Activated CD8-positive, alpha-beta T cell treated with anti-CD3 and anti-CD28 coated beads, Interleukin-2, amount 10 ng/mL, durations not matched to agents 7 days and 5 days (primary cell): ENCODE measurements at regions of chr12 and their contacts with region 1.

Region 1: GRCh38 chr12:1939801-1940607 is 21.6 kb upstream of the CACNA2D4 start:
- DNase-seq: peak; percentile 91
- ATAC-seq: peak; percentile 98
- H3K4me3 Mint-ChIP-seq: no peak overlapping the region
- H3K27ac Mint-ChIP-seq: no peak overlapping the region
- H3K4me1 Mint-ChIP-seq: peaks cover 4% of the 10 kb centered on the region
- H3K27me3 Mint-ChIP-seq: no peaks in the 10 kb centered on the region

Region 2: DNA sequence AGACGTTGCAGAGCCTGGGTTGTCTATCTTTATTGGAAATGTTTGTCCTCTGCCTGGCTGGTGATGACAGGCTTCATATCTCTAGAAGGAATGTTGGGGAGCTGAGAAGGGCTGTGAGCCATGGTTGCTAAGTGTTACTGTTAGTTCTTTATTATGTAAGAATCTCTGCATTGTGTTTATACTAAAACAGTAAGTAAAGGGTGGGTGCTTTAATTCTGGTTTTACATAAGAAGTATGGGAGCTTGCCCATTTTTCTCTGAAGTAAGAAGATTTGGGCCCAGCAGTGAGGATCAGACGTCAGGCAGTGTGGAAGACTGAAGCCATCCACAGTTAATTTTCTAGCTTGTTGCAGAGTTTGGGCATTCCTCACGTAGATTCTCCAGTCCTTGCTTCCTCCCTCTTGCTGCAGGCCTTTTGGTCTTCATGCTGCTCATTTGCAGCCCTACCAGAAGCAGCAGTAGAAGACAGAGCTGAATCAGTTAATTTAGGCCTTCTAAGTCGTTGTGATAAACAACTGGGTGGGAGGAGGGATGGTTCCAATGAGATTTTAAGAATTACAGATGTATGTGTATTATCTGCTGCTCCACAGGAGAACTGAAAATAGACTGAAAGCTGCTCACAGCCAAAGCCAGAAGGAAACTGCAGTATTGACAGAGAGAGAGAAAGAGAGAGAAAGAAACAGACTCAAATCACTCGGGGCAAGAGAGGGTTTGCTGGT is 289.6 kb before region 1 on chr12:
- CTCF ChIA-PET with region 1: interaction called, 47 read pairs
- POLR2A ChIA-PET with region 1: interaction called, 3 read pairs
- DNase-seq: no peak
- ATAC-seq: no peak
- H3K4me3 Mint-ChIP-seq: no peak overlapping the region
- H3K27ac Mint-ChIP-seq: no peak overlapping the region
- H3K4me1 Mint-ChIP-seq: peaks cover 15% of the 10 kb centered on the region
- H3K27me3 Mint-ChIP-seq: peaks cover 36% of the 10 kb centered on the region

Region 3: GRCh38 chr12:1795785-1796514 is 144.1 kb before region 1 on chr12:
- CTCF ChIA-PET with region 1: interaction called, 93 read pairs
- POLR2A ChIA-PET with region 1: interaction called, 7 read pairs
- DNase-seq: peak; percentile 94
- ATAC-seq: peak; percentile 97
- H3K4me3 Mint-ChIP-seq: peak overlapping the region; percentile 86
- H3K27ac Mint-ChIP-seq: peak overlapping the region; percentile 90
- H3K4me1 Mint-ChIP-seq: peaks cover 26% of the 10 kb centered on the region
- H3K27me3 Mint-ChIP-seq: no peaks in the 10 kb centered on the region

Region 4: GRCh38 chr12:1916371-1917171 is 23.4 kb before region 1 on chr12:
- CTCF ChIA-PET with region 1: interaction called, 24 read pairs
- POLR2A ChIA-PET with region 1: no interaction called
- DNase-seq: peak; percentile 16
- ATAC-seq: no peak
- H3K4me3 Mint-ChIP-seq: no peak overlapping the region
- H3K27ac Mint-ChIP-seq: peak overlapping the region; percentile 91
- H3K4me1 Mint-ChIP-seq: peaks cover 36% of the 10 kb centered on the region
- H3K27me3 Mint-ChIP-seq: peaks cover 16% of the 10 kb centered on the region

Region 5: GRCh38 chr12:1956716-1957115 is 16.7 kb after region 1 on chr12:
- CTCF ChIA-PET with region 1: interaction called, 41 read pairs
- POLR2A ChIA-PET with region 1: no interaction called
- DNase-seq: no peak
- ATAC-seq: no peak
- H3K4me3 Mint-ChIP-seq: no peak overlapping the region
- H3K27ac Mint-ChIP-seq: no peak overlapping the region
- H3K4me1 Mint-ChIP-seq: no peaks in the 10 kb centered on the region
- H3K27me3 Mint-ChIP-seq: no peaks in the 10 kb centered on the region

Region 6: DNA sequence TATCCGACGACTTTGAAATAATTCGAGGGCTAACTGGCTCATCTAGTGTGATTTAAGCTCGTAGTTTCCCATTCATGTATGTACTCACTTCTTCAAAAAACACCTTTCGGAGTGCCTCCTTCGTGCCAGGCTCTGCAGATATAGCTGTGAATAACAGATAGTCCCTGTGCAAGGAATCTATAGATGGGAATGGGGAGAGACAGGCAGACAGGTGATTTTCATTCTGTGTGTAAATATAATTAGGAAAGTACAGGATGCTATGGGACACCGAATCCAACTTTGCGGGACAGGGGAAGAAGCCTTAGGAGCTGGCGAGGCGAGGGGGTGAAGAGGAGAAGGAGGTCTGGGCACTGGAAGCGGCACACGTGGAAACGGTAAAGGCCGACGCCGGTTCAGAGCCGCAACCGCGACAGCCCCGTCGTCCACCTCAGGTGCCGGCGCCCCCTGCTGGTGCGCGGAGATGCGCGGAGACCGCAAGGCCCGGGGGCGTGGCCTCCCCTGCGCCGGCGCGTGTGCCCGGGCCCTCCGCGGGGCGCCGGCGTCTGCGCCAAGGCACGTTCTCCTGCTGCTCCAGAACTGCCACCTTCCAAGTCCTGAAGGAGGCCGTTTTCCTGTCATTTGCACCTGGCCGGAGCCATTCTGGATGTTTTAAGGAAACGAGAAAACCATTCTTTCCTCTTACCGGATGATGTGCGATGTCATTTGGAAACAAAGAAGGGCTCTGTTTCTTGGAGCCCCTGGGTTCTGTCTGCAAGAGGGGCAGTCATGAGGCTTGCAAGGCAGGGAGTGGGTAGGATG is 94.8 kb after region 1 on chr12:
- CTCF ChIA-PET with region 1: interaction called, 15 read pairs
- POLR2A ChIA-PET with region 1: no interaction called
- DNase-seq: peak; percentile 88
- ATAC-seq: peak; percentile 99
- H3K4me3 Mint-ChIP-seq: peak overlapping the region; percentile 45
- H3K27ac Mint-ChIP-seq: peak overlapping the region; percentile 29
- H3K4me1 Mint-ChIP-seq: peaks cover 11% of the 10 kb centered on the region
- H3K27me3 Mint-ChIP-seq: peaks cover 53% of the 10 kb centered on the region

Region 7: GRCh38 chr12:2076196-2076570 is 136.2 kb after region 1 on chr12:
- CTCF ChIA-PET with region 1: no interaction called
- POLR2A ChIA-PET with region 1: no interaction called
- DNase-seq: no peak
- ATAC-seq: no peak
- H3K4me3 Mint-ChIP-seq: no peak overlapping the region
- H3K27ac Mint-ChIP-seq: no peak overlapping the region
- H3K4me1 Mint-ChIP-seq: no peaks in the 10 kb centered on the region
- H3K27me3 Mint-ChIP-seq: no peaks in the 10 kb centered on the region